Posterior cingulate gyrus (tissue), 11 donors: ENCODE measurements at regions of chr19 and their contacts with region 1.

Region 1: GRCh38 chr19:52962394-52963246 is at the start of gene ZNF816:
- DNase-seq: peak; percentile 73 to 98 (median 87)

Region 2: DNA sequence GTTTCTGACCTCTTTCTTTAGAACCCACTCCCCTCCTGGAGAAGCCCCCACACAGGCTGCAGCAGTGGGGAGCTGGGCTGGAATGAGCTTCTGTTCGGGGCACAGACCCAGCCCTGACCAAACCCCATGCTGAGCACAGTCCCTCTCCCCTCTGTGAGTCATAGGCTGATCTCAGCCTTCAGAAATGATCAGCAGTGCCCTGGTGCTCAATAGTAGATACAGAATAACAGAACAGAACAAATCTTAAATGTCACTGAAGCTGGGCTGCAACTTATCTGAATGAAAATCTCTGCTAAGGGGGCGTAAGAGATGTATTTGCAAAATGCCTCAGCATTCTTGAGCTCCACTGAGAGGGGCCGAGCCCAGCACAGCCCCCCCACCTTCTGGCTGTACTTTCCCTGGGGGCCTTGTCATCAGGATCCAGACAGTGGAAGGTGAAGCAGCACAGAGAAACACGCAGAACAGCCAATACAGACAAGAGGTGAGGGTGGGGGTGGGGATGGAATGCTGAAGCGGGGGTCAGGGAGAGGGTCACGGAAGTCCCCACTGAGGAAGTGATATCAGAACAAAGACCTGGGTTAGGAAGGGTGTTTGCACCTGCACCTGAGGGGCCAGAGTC is 220.6 kb after region 1 on chr19:
- intact Hi-C with region 1: loop called (anchors 10 kb)
- DNase-seq: peak in 1 of 10 donors; percentile 55